Thyroid gland (tissue), 4 donors: ENCODE measurements at regions of chr10 and their contacts with region 1.

Region 1: DNA sequence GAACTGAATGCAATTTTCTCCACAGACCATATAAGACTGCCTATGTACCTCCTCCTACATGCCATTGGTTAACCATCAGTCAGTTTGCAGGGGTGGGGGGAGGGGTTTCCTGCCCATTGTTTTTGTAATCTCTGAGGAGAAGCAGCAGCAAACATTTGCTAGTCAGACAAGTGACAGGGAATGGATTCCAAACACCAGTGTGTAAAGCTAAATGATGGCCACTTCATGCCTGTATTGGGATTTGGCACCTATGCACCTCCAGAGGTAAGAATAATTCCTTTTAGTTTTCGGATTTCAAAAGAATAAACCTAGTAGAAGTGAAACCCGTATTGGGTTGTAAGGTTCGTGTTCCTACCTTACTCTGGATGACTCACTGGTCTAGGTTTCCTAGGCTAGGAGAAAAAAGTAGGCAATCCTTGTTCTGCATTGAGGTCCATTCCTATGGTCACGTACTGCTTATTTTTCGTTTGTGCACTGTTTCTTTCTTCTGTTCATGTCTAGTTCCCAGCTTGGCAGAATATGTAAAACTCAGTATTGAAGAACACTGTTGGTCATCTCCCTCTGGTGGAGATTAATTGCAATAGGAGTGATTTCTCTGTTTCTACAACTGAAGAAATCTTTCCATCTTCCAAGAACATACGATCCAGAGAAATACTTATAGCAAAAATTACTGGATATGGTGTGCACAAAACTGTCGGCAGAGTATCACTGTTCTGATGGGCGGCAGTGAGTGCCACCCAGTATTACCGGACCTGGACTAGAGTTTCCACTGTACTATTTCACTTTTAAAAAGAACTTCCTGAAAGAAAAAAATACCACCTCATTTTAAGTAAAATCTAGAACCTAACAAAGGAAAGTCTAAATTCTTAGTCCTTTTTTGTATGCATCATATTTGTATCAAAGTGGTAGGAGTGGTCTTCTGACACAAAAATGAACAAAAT is at the start of gene AKR1C3:
- DNase-seq: no peak
- H3K4me3 ChIP-seq: peak within 1 kb of the TSS in 2 of 3 donors; percentile 22 to 30
- H3K27ac ChIP-seq: peak within 1 kb of the TSS; percentile 35 to 81 (median 70)
- H3K4me1 ChIP-seq: no peaks in the 10 kb centered on the region
- H3K27me3 ChIP-seq: no peaks in the 10 kb centered on the region
- CTCF ChIP-seq: peak; percentile 36 to 96 (median 72)
- POLR2A ChIP-seq: peak in 1 of 2 donors; percentile 49
- total RNA-seq, gene AKR1C3: 42.7 to 73.6 (median 67.4) TPM

Region 2: GRCh38 chr10:4498711-4499251 is 595.8 kb before region 1 on chr10:
- intact Hi-C with region 1: no loop called
- DNase-seq: no peak
- H3K4me3 ChIP-seq: no peak overlapping the region
- H3K27ac ChIP-seq: peak overlapping the region; percentile 34 to 86 (median 58)
- H3K4me1 ChIP-seq: peaks cover 3 to 11% of the 10 kb centered on the region in 2 donors
- H3K27me3 ChIP-seq: no peaks in the 10 kb centered on the region
- CTCF ChIP-seq: no peak
- POLR2A ChIP-seq: no peak

Region 3: DNA sequence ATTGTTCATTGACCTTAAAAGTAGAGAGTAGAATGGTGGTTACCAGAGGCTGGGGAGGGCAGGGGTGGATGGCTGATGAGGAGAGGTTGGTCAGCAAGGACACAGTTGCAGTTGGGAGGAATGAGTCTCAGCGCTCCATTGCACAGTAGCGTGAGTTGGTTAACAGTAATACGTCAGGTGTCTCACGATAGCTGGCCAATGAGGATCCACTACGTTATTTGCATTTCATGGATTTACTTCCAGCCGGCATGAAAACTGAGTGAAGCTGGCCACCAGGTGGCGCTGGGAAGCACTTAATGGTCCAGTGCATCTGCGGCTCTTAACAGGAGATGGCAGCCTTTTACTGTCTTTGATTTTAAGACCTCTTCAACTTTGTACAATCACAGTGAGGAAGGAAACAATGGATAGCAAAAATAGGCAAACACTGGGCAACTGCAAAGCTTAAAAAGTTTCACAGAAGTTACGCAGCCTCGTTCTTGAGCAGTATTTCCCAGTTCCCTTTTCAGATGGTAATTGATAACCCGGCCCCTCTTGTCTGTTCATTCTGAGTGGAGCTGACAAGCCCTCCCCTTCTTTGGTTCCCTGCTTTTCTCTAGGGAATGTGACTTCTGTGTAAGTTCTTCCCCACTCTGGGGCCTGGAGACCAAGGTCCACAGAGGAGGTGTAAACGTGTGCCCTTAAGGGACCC is 244.8 kb before region 1 on chr10:
- intact Hi-C with region 1: loop called (anchors 5 kb)
- DNase-seq: peak; percentile 94 to 96
- H3K4me3 ChIP-seq: no peak overlapping the region
- H3K27ac ChIP-seq: peak overlapping the region; percentile 14 to 89 (median 73)
- H3K4me1 ChIP-seq: peaks cover 24 to 30% of the 10 kb centered on the region in 2 donors
- H3K27me3 ChIP-seq: no peaks in the 10 kb centered on the region
- CTCF ChIP-seq: peak; percentile 66 to 100 (median 96)
- POLR2A ChIP-seq: peak in 1 of 2 donors; percentile 57

Region 4: GRCh38 chr10:4953405-4953804 is 141.1 kb before region 1 on chr10:
- intact Hi-C with region 1: no loop called
- DNase-seq: no peak
- H3K4me3 ChIP-seq: no peak overlapping the region
- H3K27ac ChIP-seq: no peak overlapping the region
- H3K4me1 ChIP-seq: peaks cover 14 to 28% of the 10 kb centered on the region in 2 donors
- H3K27me3 ChIP-seq: no peaks in the 10 kb centered on the region
- CTCF ChIP-seq: no peak
- POLR2A ChIP-seq: no peak

Region 5: GRCh38 chr10:5147981-5148677 is 53.6 kb after region 1 on chr10:
- intact Hi-C with region 1: no loop called
- DNase-seq: no peak
- H3K4me3 ChIP-seq: no peak overlapping the region
- H3K27ac ChIP-seq: no peak overlapping the region
- H3K4me1 ChIP-seq: no peaks in the 10 kb centered on the region
- H3K27me3 ChIP-seq: no peaks in the 10 kb centered on the region
- CTCF ChIP-seq: no peak
- POLR2A ChIP-seq: no peak

Region 6: DNA sequence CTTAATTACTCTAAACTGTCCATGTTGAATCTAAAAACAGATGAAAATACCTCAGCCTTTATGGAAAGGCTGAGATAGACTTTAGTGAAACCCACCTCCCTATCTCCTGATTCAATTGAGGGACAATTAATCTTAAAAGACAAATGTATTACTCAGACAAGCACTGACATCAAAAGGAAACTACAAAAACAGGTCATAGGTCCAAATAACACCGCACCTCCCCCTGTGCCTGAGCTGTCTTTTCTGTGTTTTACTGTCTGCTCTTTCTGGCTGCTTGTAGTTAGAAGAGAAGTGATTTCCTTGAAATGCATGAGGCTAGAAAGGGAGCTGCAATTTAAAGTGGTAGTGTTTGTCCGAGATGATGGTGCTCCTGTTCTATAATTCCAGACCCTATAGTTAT is 74.4 kb after region 1 on chr10:
- intact Hi-C with region 1: no loop called
- DNase-seq: no peak
- H3K4me3 ChIP-seq: no peak overlapping the region
- H3K27ac ChIP-seq: no peak overlapping the region
- H3K4me1 ChIP-seq: no peaks in the 10 kb centered on the region
- H3K27me3 ChIP-seq: no peaks in the 10 kb centered on the region
- CTCF ChIP-seq: no peak
- POLR2A ChIP-seq: no peak

Region 7: GRCh38 chr10:5283305-5284158 is 189.0 kb after region 1 on chr10:
- intact Hi-C with region 1: loop called (anchors 10 kb)
- DNase-seq: peak; percentile 64 to 78
- H3K4me3 ChIP-seq: no peak overlapping the region
- H3K27ac ChIP-seq: no peak overlapping the region
- H3K4me1 ChIP-seq: no peaks in the 10 kb centered on the region
- H3K27me3 ChIP-seq: no peaks in the 10 kb centered on the region
- CTCF ChIP-seq: peak in 5 of 6 experiments; percentile 42 to 82 (median 76)
- POLR2A ChIP-seq: no peak

Region 8: DNA sequence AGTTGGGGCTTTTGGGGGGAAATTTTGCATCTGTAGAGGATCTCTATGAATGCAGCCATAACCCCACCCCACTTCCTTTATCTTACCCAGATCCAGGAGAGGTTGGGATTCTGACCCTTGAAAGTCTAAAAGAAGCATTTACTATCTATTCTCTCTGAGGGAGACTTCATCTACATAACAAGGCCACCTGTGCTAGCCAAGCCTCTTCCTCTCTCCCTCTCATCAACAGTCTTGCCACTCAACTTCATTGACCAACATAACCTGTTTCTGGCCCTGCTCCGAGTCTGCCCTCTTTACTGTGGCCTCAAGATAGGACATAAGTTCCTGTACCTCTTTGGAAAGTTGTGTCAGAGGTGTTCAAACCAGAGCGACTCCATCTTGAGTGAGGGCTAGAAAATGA is 290.7 kb after region 1 on chr10:
- intact Hi-C with region 1: loop called (anchors 10 kb)
- DNase-seq: no peak
- H3K4me3 ChIP-seq: no peak overlapping the region
- H3K27ac ChIP-seq: no peak overlapping the region
- H3K4me1 ChIP-seq: peaks cover 0 to 3% of the 10 kb centered on the region in 2 donors
- H3K27me3 ChIP-seq: no peaks in the 10 kb centered on the region
- CTCF ChIP-seq: no peak
- POLR2A ChIP-seq: no peak